Calu3 (cell line): ENCODE measurements at regions of chr17 and their contacts with region 1.

Region 1: DNA sequence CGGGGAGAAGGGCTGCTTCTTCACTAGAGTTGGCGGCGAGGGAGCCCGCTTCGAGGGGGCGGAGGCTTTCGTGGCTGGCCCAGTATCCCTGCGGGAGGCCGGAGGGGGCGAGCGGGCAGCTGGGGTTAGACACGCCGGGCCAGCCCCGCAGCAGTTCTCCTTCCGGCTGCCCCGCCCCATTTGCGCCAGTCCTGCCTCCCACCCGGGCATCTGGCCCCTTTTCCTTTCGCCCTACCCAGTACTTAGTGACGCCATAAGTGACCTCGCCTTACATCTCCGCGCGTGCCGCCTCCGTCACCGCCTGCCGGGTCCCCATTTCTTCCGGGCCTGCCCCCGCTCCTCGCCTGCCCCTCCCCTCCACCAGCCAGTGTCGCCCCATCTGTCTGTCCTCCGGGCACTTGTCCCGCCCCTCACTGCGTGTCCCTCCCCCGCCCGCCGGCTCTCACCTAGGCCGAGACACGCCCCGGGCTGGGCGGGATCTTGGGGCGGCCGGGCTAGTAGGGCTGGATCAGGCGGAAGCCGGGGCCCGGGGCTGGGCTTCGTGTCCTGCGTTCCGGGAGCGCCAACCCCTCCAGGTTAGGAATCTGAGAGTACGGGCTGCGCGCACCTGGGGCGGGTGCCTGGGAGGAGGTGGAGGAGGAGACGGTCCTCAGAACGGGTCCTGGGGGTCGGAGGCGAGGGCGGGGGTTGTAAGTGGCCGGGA is 14.3 kb downstream of the SPATA32 start:
- DNase-seq: peak; percentile 100
- H3K4me3 Mint-ChIP-seq: peak overlapping the region; percentile 97
- H3K27ac Mint-ChIP-seq: peak overlapping the region; percentile 89
- H3K4me1 Mint-ChIP-seq: peaks cover 10% of the 10 kb centered on the region
- H3K27me3 Mint-ChIP-seq: no peaks in the 10 kb centered on the region
- CTCF ChIP-seq: no peak

Region 2: DNA sequence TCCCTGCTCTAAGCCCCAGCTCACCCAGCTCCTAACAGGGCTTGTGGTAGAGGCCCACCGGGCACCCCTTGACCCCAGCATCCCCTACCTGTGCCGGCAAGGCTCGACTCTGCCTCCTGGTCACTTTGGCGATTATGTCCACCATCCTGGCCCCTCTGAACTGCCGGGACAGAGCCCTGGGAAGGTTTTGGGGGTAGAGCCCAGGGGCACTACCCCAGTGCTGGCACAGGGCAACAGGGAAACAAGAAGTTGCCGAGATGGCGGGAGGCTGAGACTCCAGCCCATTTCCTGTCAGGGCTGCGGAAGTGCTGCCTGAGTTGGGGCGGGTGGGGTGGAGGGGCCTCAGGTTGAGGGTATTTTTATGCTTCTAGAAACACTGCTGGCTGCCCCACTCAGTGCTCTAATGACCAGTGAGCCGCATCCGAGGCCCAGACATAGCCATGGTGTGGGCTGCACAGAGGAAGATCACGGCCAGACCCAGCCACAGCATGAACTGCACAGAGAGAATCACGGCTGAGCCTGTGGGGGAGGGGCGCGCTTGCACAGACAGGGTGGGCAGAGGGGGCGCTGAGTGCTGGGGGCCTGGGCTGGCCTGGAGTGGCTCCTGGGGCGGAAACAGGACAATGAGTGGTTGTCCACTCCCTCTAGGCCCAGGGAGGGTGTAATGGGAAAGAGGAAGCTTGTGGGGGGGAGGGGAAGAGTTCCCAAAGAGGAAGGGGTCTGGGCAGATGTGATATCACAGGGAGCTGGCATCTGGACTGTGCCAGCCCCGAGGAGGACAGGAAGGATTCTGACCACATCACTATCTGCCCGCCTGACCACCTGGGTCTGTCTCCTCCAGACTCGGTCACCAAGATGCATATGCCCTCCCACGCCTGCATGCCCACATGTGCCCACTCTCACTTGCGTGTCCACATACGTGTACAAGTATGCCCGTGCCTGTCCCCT is 162.8 kb after region 1 on chr17:
- CTCF ChIA-PET with region 1: interaction called, 13 read pairs
- intact Hi-C with region 1: no loop called
- DNase-seq: no peak
- H3K4me3 Mint-ChIP-seq: no peak overlapping the region
- H3K27ac Mint-ChIP-seq: peak overlapping the region; percentile 20
- H3K4me1 Mint-ChIP-seq: peaks cover 79% of the 10 kb centered on the region
- H3K27me3 Mint-ChIP-seq: no peaks in the 10 kb centered on the region
- CTCF ChIP-seq: no peak